GM10248 (cell line): ENCODE measurements at regions of chr3 and their contacts with region 1.

Region 1: GRCh38 chr3:198080521-198081280 is 120.7 kb downstream of the LMLN start:
- DNase-seq: peak; percentile 65
- CTCF ChIP-seq: peak; percentile 73

Region 2: GRCh38 chr3:197983076-197983475 is 97.6 kb before region 1 on chr3:
- CTCF ChIA-PET with region 1: no interaction called
- POLR2A ChIA-PET with region 1: interaction called, 10 read pairs
- DNase-seq: no peak
- CTCF ChIP-seq: no peak

Region 3: DNA sequence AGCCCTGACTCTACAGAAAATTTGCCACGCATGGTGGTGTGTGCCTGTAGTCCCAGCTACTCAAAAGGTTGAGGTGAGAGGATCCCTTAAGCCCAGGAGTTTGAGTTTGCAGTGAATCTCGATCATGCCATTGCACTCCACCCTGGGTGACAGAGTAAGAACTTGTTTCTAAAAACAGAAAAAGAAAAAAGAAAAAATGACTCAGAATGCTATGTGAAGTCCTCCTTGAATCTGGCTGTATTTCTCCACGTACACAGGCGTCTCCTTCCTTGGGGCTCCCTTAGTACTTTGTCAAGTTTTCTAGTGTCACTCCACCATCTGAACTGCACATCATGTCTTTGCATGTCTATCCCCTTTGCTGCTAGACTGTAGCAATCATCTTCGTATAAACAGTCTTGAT is 16.3 kb before region 1 on chr3:
- CTCF ChIA-PET with region 1: interaction called, 15 read pairs
- POLR2A ChIA-PET with region 1: no interaction called
- DNase-seq: no peak
- CTCF ChIP-seq: no peak